MCF 10A (cell line): ENCODE measurements at regions of chr17 and their contacts with region 1.

Region 1: DNA sequence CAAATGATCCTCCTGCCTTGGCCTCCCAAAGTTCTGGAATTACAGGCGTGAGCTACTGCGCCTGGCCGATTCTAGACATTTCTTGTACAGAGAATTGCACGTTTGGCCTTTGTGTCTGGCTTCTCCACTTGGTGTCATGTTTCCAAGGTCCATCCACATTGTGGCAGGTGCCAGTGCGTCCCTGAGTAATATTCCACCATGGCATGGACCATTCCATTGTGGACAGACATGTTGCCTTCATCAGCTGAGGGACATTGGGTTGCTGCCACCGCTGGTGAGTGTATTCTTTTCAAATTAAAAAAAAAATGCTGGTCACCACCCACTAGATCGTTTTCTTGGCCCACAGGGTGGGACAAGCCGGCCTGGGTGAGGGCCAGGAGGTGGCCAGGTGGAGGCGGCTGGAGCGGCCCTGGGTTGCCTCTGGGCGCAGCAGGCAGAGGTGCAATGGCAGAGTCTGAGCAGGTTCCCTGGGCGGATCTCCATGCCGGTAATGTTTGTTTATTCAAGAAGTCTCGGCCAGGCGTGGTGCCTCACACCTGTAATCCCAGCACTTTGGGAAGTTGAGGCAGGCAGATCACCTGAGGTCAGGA is 274.1 kb downstream of the SEC14L1 start:
- DNase-seq: no peak
- H3K4me3 Mint-ChIP-seq: no peak overlapping the region
- H3K27ac Mint-ChIP-seq: no peak overlapping the region
- H3K4me1 Mint-ChIP-seq: peaks cover 27% of the 10 kb centered on the region
- H3K27me3 Mint-ChIP-seq: no peaks in the 10 kb centered on the region
- CTCF ChIP-seq: no peak

Region 2: GRCh38 chr17:77279448-77280303 is 135.2 kb before region 1 on chr17:
- CTCF ChIA-PET with region 1: no interaction called
- POLR2A ChIA-PET with region 1: no interaction called
- intact Hi-C with region 1: no loop called
- DNase-seq: peak; percentile 97
- H3K4me3 Mint-ChIP-seq: peak overlapping the region; percentile 88
- H3K27ac Mint-ChIP-seq: peak overlapping the region; percentile 60
- H3K4me1 Mint-ChIP-seq: peaks cover 30% of the 10 kb centered on the region
- H3K27me3 Mint-ChIP-seq: no peaks in the 10 kb centered on the region
- CTCF ChIP-seq: no peak

Region 3: DNA sequence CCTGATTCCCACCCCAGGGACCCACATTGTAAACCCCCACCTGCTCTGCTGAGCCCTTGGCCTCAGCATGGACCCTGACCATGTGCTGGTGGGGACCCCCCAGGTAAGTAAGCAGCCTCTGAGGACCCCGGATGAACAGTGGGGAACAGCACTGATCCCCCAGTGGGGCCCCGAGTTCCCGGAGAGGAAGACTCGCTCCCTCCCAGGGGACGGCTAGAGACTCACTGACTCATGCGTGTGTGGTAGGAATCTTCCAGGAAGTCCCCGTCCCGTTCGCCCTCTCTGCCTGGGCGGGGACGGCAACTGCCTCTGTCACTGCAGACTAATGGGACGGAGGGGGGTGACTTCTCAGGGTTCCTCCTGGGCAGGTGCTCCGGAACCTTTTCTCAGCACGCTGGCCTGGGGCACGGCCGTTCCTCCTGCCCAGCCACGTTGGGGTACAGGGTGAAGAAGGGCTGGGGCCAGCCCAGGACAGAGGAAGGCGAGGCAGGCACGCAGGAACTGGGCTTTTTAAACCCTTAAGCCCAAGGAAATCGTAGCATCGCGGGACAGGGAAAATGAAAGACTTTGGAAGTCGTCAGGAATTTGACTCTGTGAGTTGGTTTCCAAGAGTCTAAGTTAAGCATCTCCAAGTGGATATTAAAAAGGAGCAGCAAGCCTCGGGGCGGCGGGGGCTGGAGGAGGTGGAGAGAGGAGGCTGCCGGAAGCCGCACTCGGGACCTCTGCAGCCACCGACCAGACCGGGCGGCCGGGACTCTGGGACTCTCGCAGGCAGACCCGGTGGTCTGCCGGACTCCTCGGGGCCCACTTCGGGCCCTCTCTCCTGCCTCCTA is 95.5 kb before region 1 on chr17:
- CTCF ChIA-PET with region 1: interaction called, 3 read pairs
- POLR2A ChIA-PET with region 1: interaction called, 13 read pairs
- intact Hi-C with region 1: no loop called
- DNase-seq: peak; percentile 90
- H3K4me3 Mint-ChIP-seq: peak overlapping the region; percentile 88
- H3K27ac Mint-ChIP-seq: peak overlapping the region; percentile 89
- H3K4me1 Mint-ChIP-seq: peaks cover 46% of the 10 kb centered on the region
- H3K27me3 Mint-ChIP-seq: no peaks in the 10 kb centered on the region
- CTCF ChIP-seq: no peak